PC-3 (cell line): ENCODE measurements at regions of chr2 and their contacts with region 1.

Region 1: DNA sequence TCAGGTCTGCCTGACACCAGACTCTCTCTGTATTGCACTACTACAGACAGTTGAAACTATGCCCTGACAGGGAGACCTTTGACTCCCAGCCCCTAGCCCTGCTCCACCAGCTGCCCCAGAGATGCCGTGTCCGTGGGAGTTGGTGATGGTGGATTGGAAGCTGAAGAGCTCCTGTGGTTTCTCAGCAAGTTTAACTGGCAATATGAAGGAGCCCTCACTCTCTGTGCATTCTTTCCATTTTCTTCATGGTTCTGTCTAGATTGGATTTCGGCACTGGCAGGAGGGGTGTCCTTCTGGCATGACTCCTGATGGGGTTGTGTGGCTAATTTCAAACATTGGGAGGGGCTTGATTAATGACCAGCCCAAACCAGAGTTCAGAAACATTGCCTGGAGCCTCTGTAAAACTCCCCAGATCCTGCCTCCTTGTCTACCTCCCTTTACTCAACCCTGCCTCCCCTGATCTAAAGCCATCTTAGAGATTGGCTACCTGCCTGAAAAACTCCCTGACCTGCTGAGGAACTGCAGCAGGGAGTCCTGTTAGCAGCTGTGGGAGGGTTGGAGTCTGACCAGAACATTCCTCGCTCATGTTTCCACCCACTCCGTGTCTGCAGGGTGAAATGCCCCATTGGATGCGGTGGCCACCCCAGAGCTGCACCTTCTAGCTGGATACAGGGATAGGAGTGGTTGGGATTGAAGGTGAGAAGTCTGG is 206.9 kb upstream of the SPRED2 start:
- DNase-seq: peak; percentile 20
- ATAC-seq: no peak
- H3K4me3 ChIP-seq: 0 out of 2 replicates have a peak overlapping the region, but pooled peaks have one; percentile 60
- H3K27ac ChIP-seq: no peak overlapping the region
- H3K4me1 ChIP-seq: no peaks in the 10 kb centered on the region
- H3K27me3 ChIP-seq: peaks cover 31% of the 10 kb centered on the region
- CTCF ChIP-seq: no peak

Region 2: GRCh38 chr2:65710779-65711295 is 71.5 kb after region 1 on chr2:
- CTCF ChIA-PET with region 1: interaction called, 25 read pairs
- POLR2A ChIA-PET with region 1: no interaction called
- intact Hi-C with region 1: loop called (anchors 1 kb)
- DNase-seq: peak; percentile 65
- ATAC-seq: peak; percentile 81
- H3K4me3 ChIP-seq: no peak overlapping the region
- H3K27ac ChIP-seq: no peak overlapping the region
- H3K4me1 ChIP-seq: peaks cover 7% of the 10 kb centered on the region; the same call in 1 of the 2 replicates
- H3K27me3 ChIP-seq: peaks cover 47% of the 10 kb centered on the region
- CTCF ChIP-seq: peak; percentile 79